ENCODE measurements at regions of chr11 and their contacts with region 1.

Region 1: GRCh38 chr11:64304316-64305072 is 830 bp upstream of the ESRRA start:
- DNase-seq: no peak
- H3K4me3 ChIP-seq: peak overlapping the region; percentile 73
- CTCF ChIP-seq: peak; percentile 93

Region 2: DNA sequence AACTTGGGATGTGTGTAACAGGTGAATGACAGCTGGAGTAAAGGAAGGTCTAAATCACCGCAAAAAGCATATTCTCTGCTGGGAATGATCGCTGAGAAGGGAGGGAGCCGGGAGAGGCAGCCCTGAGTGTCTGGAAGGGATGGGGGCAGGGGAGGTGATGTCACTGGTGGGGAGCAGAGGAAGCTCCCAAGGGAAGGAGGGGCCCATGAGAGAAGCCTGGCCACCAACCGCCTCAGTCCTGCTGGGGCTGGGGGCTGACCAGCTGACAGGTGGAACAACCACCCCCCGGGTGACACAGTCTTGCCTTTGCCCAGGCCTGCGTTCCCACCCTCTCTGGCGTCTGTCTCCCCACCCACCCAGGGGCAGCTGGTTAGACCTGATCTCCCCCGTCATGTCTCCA is 274.7 kb before region 1 on chr11:
- CTCF ChIA-PET with region 1: no interaction called
- POLR2A ChIA-PET with region 1: no interaction called
- DNase-seq: no peak
- H3K4me3 ChIP-seq: no peak overlapping the region
- CTCF ChIP-seq: no peak

Region 3: GRCh38 chr11:64204464-64204989 is 100.0 kb before region 1 on chr11:
- CTCF ChIA-PET with region 1: interaction called, 305 read pairs
- POLR2A ChIA-PET with region 1: interaction called, 5 read pairs
- DNase-seq: peak; percentile 74
- H3K4me3 ChIP-seq: no peak overlapping the region
- CTCF ChIP-seq: peak; percentile 83

Region 4: GRCh38 chr11:64246871-64247728 is 57.4 kb before region 1 on chr11 and contains the start of gene PPP1R14B:
- CTCF ChIA-PET with region 1: interaction called, 139 read pairs
- POLR2A ChIA-PET with region 1: interaction called, 4 read pairs
- DNase-seq: no peak
- H3K4me3 ChIP-seq: peak within 1 kb of the TSS; percentile 88
- CTCF ChIP-seq: no peak

Region 5: GRCh38 chr11:64284048-64284961 is 20.2 kb before region 1 on chr11 and contains the start of gene BAD:
- CTCF ChIA-PET with region 1: interaction called, 166 read pairs
- POLR2A ChIA-PET with region 1: interaction called, 3 read pairs
- DNase-seq: no peak
- H3K4me3 ChIP-seq: peak within 1 kb of the TSS; percentile 73
- CTCF ChIP-seq: no peak

Region 6: GRCh38 chr11:64331557-64332371 is 27.3 kb after region 1 on chr11:
- CTCF ChIA-PET with region 1: interaction called, 34 read pairs
- POLR2A ChIA-PET with region 1: no interaction called
- DNase-seq: peak; percentile 21
- H3K4me3 ChIP-seq: no peak overlapping the region
- CTCF ChIP-seq: peak; percentile 77

Region 7: DNA sequence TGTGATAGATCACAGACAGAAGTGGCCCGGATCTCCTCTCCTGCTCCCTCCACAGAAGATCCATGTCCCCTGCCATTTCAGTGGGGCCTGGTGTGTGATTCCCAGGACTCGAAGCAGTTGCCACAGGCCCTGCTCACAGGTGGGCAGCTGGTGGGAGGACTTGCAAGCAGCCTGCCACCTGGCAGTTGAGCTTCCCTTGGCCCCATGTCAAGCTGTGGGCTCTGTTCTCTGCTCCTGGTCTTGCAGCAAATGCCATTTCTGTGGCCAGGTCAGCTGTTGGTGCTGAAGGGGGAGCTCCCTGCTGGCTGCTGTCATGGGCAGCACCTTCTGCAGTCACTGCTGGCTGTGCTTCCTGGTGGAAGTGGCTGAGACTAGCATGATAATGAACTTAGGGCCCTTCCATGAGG is 227.4 kb after region 1 on chr11:
- CTCF ChIA-PET with region 1: no interaction called
- POLR2A ChIA-PET with region 1: no interaction called
- DNase-seq: no peak
- H3K4me3 ChIP-seq: no peak overlapping the region
- CTCF ChIP-seq: no peak